Dendritic cell treated with granulocyte-macrophage colony-stimulating factor and Interleukin-4, amounts not matched to agents 40 ng/mL and 50 ng/mL, for 4 days (primary cell): ENCODE measurements at regions of chr10 and their contacts with region 1.

Region 1: DNA sequence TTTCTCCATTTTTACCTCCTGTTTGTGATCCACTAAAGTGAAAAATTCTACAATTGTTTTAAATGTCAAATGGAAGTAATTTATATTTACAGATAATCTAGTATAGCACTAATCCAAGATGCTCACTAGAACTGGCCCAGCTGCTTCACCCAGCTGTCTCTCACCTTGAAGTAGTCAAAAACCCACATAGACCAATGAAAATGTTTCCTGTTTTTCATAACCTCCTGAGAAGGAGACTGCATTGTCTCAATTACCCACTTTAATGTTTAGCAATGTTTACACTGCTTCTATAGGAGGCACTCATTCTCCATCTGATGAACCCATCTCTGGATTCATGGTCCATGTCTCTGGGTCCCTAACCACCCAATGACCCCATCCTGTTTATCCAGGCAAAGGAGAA is 56.1 kb upstream of the ADO start:
- H3K4me3 Mint-ChIP-seq: no peak overlapping the region
- H3K27ac Mint-ChIP-seq: peak overlapping the region; percentile 87
- H3K4me1 Mint-ChIP-seq: peaks cover 70% of the 10 kb centered on the region
- H3K27me3 Mint-ChIP-seq: no peaks in the 10 kb centered on the region

Region 2: GRCh38 chr10:61600389-61600788 is 1148.0 kb before region 1 on chr10:
- intact Hi-C with region 1: no loop called
- H3K4me3 Mint-ChIP-seq: no peak overlapping the region
- H3K27ac Mint-ChIP-seq: no peak overlapping the region
- H3K4me1 Mint-ChIP-seq: no peaks in the 10 kb centered on the region
- H3K27me3 Mint-ChIP-seq: no peaks in the 10 kb centered on the region

Region 3: DNA sequence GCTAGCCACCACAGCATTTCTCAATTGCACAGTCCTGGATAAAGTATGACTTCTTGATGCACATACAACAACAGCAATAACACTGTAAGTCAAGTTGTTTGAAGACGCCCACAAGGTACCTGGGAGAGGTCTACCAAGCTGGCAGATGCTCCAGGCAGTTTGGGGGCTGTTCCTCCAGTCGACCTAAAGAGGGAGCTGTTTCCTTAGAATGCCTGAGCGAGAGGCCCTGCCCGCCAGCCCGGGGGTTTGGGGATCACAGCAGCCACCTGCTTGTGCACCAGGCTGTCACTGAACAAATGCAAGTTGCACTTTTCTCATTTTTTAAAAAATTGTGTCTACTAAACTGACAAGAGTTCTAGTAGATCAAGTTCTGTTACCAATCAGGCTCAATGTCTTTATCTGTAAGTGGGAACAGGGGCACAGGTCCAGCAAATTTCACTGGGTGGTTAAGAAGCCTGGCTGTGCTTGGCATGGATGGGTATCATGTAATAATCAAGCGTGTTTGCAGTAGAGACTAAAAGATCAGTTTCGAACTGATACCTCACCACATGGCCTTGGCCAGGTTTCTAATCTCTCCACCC is 137.6 kb before region 1 on chr10:
- intact Hi-C with region 1: loop called (anchors 5 kb)
- H3K4me3 Mint-ChIP-seq: no peak overlapping the region
- H3K27ac Mint-ChIP-seq: peak overlapping the region; percentile 1
- H3K4me1 Mint-ChIP-seq: peaks cover 57% of the 10 kb centered on the region
- H3K27me3 Mint-ChIP-seq: no peaks in the 10 kb centered on the region

Region 4: DNA sequence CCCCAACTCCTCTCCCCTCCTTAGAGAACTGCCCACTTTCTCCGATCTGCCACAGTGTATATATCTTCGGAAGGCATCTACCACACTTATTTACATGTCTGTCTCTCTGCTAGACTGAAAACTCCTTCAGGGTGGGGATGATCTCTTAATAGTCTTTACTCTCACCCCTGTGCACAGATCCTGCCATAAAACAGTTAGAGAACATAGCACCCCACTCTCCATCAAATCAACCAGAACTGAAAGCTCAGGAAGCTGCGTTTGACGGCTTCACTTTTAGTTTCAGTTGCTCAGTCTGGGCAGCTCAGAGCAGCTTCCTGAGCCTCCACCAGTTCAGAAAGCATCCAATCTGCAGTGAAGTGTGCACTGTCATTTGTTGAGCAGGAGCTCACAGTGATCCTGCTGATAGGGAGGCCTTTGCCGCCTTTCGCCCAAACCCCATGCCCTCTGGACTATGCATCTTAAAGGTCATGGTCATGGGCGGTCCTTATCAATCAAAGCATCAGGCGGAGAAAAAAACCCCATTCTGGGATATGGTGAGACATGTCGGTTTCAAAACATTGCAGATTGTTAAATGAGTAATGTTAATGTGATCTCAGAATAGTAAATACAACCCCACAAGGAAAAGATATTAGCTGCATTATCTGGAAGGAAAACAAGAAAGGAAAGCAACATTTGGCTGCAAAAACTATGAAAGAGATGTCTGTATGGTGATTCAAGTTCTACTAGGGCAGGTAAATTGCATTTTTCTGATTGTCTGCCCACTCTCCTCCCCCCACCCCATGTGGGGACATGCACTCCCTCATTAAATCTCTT is 110.9 kb before region 1 on chr10:
- intact Hi-C with region 1: loop called (anchors 1 kb)
- H3K4me3 Mint-ChIP-seq: no peak overlapping the region
- H3K27ac Mint-ChIP-seq: no peak overlapping the region
- H3K4me1 Mint-ChIP-seq: peaks cover 19% of the 10 kb centered on the region
- H3K27me3 Mint-ChIP-seq: no peaks in the 10 kb centered on the region

Region 5: DNA sequence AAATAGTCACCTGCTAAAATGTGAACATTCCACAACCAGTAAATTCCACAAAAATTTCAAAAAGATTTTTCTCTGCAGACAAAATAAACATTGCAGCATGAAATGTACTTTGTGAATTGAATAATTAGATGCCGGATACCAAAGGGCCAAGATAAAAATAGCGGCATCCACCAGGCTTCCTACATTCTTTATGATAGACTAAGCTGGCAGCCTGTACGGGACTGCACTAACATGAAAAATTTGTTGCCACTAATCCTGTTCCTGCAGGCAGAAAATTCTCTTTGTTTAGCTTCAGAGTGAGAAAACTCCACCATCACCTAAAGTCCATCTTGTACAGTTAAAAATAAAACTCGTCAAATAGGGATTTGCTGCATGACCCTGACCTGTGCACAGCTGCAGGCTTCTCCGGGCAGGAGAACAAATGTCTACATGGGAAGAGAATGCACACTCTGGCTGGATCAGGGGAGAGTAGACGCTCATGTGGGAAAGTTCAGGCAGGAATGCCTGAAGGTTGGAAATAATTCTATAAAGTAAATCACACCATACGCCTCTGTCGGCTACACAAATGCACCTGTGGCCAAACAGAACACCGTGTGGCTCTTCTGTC is 40.6 kb after region 1 on chr10:
- intact Hi-C with region 1: no loop called
- H3K4me3 Mint-ChIP-seq: no peak overlapping the region
- H3K27ac Mint-ChIP-seq: no peak overlapping the region
- H3K4me1 Mint-ChIP-seq: peaks cover 13% of the 10 kb centered on the region
- H3K27me3 Mint-ChIP-seq: peaks cover 14% of the 10 kb centered on the region

Region 6: DNA sequence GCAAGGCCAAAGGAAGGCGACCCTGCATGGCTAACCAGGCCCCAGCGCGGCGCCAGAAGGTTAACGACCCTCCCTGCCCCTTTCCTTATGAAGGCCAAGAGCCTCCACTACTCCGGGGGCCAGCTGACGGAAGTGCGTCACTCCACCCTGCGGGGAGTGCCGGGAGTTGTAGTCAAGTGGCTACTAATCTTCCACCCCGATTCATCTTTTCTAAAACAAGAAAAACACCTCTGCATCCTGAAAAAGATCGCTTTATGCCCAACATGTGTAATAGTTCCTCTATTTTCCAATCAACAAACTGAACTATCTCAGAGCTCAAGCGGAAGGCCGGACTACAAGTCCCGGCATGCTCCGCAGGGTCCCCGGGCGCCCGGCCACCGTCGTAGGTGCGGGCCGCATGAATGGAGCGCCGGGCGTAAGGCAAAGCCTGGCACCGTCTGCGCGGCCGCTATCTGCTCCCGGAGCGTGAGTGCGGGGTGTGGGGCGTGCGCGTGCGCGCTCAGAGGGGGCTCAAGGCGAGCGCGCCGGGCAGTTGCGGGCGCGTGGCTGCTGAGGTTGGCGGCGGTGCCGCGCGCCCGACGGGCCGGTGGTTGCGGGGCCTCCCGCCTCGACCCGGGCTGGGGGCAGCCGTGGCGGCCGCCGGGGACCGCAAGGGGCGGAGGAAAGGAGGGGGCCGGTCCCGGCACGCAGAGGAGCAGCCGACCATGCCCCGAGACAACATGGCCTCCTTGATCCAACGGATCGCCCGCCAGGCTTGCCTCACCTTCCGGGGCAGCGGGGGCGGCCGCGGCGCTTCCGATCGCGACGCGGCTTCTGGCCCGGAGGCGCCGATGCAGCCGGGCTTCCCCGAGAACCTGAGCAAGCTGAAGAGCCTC is 56.2 kb after region 1 on chr10 and contains the start of gene ADO:
- intact Hi-C with region 1: loop called (anchors 5 kb)
- H3K4me3 Mint-ChIP-seq: peak within 1 kb of the TSS; percentile 93
- H3K27ac Mint-ChIP-seq: peak within 1 kb of the TSS; percentile 100
- H3K4me1 Mint-ChIP-seq: peaks cover 54% of the 10 kb centered on the region
- H3K27me3 Mint-ChIP-seq: peaks cover 5% of the 10 kb centered on the region

Region 7: DNA sequence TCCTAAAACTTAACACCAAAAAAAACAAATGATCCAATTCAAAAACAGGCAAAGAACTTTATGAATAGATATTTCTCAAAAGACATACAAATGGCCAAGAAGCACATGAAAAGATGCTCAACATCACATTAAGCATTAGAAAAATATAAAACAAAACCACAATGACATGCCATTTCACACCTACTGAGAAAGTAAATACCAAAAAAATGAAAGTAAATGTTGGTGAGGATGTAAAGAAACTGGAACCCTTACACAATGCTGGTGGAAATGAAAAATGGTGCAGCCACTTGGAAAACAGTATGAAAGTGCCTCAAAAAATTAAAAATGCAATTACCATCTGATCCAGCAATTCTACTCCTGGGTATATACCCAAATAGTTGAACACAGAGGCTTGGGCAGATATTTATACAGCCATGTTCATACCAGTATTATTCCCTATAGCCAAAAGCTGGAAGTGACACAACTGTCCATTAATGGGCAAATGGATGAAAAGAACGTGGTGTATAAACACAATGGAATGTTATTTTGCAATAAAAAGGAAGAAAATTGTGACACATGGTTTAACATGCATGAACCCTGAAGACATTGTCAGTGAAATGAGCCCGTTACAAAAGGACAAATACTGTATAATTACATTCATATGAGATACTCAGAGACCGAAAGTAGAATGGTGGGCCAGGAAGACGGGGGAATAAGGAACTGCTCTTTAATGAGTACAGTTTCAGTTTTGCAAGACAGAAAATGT is 628.3 kb after region 1 on chr10:
- intact Hi-C with region 1: no loop called
- H3K4me3 Mint-ChIP-seq: peak overlapping the region; percentile 54
- H3K27ac Mint-ChIP-seq: peak overlapping the region; percentile 57
- H3K4me1 Mint-ChIP-seq: peaks cover 32% of the 10 kb centered on the region
- H3K27me3 Mint-ChIP-seq: no peaks in the 10 kb centered on the region